ENCODE measurements at regions of chr1 and their contacts with region 1.

Region 1: GRCh38 chr1:71080739-71081696 is at the start of gene ZRANB2:
- H3K4me3 Mint-ChIP-seq: peak within 1 kb of the TSS; percentile 90
- H3K27ac Mint-ChIP-seq: peak within 1 kb of the TSS; percentile 98
- H3K4me1 Mint-ChIP-seq: peaks cover 7% of the 10 kb centered on the region
- H3K27me3 Mint-ChIP-seq: peaks cover 6% of the 10 kb centered on the region

Region 2: DNA sequence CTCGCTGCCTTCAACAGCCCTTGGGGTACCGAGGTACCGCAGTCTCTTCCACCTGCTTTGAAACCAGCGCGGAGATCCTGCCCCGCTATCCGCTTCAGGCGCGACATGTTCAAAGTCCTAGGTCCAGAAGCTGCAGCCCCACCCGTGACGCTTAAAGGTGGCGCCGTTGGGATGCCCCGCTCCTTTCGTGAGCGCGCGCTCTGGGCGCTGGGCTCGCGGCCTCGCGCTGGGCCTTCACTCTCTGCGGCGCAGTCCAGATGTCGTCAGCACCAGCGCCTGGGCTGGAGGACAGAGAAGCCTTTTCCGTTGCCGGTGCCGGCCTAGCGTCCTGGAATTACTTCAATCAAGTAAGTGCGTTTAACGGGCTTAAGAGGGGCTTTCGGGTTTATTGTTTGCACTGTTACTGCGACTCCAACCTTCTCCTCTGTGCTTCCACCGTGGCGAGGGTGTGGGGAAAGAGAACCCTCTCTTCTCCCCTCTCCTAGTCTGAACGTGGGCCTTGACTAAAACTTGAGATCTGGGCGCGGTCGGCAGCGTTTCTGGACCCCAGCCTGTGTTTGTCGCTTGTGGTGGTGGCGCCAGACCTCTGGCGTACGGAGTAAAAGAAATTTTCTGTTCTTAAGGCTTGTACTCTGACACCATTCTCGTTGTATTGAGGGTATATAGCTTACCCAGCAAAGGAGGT is 875.4 kb before region 1 on chr1 and contains the start of gene LRRC40:
- intact Hi-C with region 1: loop called (anchors 2 kb)
- H3K4me3 Mint-ChIP-seq: peak within 1 kb of the TSS; percentile 91
- H3K27ac Mint-ChIP-seq: peak within 1 kb of the TSS; percentile 94
- H3K4me1 Mint-ChIP-seq: peaks cover 48% of the 10 kb centered on the region
- H3K27me3 Mint-ChIP-seq: no peaks in the 10 kb centered on the region

Measured in dendritic cell treated with granulocyte-macrophage colony-stimulating factor and Interleukin-4, amounts not matched to agents 40 ng/mL and 50 ng/mL, for 4 days (primary cell).